OCI-LY7 (cell line): ENCODE measurements at regions of chr6 and their contacts with region 1.

Region 1: GRCh38 chr6:31958741-31959739 is at the starts of genes NELFE and SKIC2:
- DNase-seq: peak; percentile 99
- H3K4me3 ChIP-seq: peak within 1 kb of the TSS; percentile 97
- H3K27ac ChIP-seq: no peak within 1 kb of the TSS
- H3K4me1 ChIP-seq: peaks cover 18% of the 10 kb centered on the region
- CTCF ChIP-seq: no peak
- total RNA-seq, gene NELFE: 94.8 and 134 TPM in 2 replicates
- total RNA-seq, gene SKIC2: 45.8 and 62.2 TPM in 2 replicates

Region 2: DNA sequence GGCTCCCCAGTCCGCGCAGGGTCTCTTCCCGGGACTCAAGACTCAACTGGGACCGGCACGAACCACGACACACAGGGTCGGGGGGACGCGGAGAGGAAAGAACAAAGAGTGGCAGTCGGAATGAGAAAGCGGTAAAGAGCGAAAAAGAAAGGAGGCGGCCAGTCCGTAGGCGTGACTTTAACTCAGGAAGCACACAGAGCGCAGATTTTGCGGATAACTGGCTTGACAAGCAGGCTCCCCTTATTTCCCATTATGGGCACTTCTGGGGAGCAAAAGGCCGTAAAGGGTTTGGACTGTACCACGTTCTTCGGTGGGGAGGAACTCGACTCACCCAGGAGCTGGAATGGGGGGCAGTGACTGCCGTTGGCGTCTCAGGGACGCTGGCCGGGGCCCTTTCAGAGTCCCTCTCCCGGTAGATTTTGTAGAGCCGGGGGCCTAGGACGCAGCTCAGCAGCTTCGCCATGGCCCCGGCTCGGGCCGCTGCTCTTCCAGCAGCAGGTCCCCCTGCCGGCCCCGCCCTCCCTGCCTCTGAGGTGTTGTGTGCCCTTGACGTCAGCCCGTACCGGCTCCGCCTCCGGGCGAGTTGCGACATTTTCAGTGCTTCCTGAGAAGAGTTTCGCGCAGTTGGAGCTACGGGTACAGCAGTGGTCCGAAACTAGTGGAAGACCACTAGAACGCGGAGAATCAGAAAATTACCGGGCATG is 256.1 kb before region 1 on chr6 and contains the start of gene ABHD16A:
- CTCF ChIA-PET with region 1: no interaction called
- POLR2A ChIA-PET with region 1: no interaction called
- intact Hi-C with region 1: loop called (anchors 10 kb)
- DNase-seq: peak; percentile 99
- H3K4me3 ChIP-seq: peak within 1 kb of the TSS; percentile 78
- H3K27ac ChIP-seq: peak within 1 kb of the TSS; percentile 74
- H3K4me1 ChIP-seq: peaks cover 20% of the 10 kb centered on the region
- CTCF ChIP-seq: no peak
- total RNA-seq, gene ABHD16A: 28.6 and 34.8 TPM in 2 replicates

Region 3: GRCh38 chr6:31971993-31972708 is 13.1 kb after region 1 on chr6 and contains the start of gene DXO:
- CTCF ChIA-PET with region 1: no interaction called
- POLR2A ChIA-PET with region 1: interaction called, 26 read pairs
- intact Hi-C with region 1: loop called (anchors 1 kb)
- DNase-seq: peak; percentile 99
- H3K4me3 ChIP-seq: peak within 1 kb of the TSS; percentile 82
- H3K27ac ChIP-seq: peak within 1 kb of the TSS; percentile 70
- H3K4me1 ChIP-seq: peaks cover 25% of the 10 kb centered on the region
- CTCF ChIP-seq: no peak
- total RNA-seq, gene DXO: 34.9 and 36.5 TPM in 2 replicates